H1 (cell line): ENCODE measurements at regions of chr2 and their contacts with region 1.

Region 1: DNA sequence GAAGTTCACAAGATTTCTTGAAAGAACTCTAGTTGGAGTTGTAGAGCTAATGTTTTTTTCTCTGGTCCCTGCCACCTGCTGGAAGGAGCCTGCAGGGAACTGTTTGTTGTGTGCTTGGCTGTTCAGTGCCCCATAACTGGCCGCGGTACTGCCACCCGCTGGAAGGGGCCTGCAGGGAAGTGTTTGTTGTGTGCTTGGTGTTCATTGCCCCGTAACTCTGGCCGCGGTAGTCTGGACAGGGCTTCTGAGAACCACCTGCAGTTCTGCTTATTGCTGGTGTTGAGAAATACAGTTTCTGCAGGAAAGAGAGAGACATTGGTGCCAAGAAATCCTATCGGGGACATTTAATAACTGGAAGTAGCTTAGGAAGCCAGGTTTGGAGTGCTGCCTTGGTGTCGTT is 58.1 kb downstream of the AGAP1 start:
- DNase-seq: peak in 1 of 2 experiments; percentile 38
- H3K4me3 ChIP-seq: no peak overlapping the region
- H3K27ac ChIP-seq: no peak overlapping the region
- H3K4me1 ChIP-seq: peaks cover 0 to 14% (median 4%) of the 10 kb centered on the region in 4 experiments; a peak in 3 of 7 replicates
- H3K27me3 ChIP-seq: no peaks in the 10 kb centered on the region
- CTCF ChIP-seq: peak; percentile 72 to 95 (median 73)
- EP300 ChIP-seq: no peak
- POLR2A ChIP-seq: no peak
- RAD21 ChIP-seq: peak; percentile 63 to 75

Region 2: GRCh38 chr2:235358981-235359471 is 192.9 kb before region 1 on chr2:
- CTCF ChIA-PET with region 1: no interaction called
- POLR2A ChIA-PET with region 1: no interaction called
- DNase-seq: no peak
- H3K4me3 ChIP-seq: no peak overlapping the region
- H3K27ac ChIP-seq: no peak overlapping the region
- H3K4me1 ChIP-seq: no peaks in the 10 kb centered on the region
- H3K27me3 ChIP-seq: no peaks in the 10 kb centered on the region
- CTCF ChIP-seq: no peak
- EP300 ChIP-seq: no peak
- POLR2A ChIP-seq: no peak
- RAD21 ChIP-seq: no peak

Region 3: GRCh38 chr2:235495373-235496238 is 56.4 kb before region 1 on chr2:
- CTCF ChIA-PET with region 1: interaction called, 25 read pairs
- POLR2A ChIA-PET with region 1: no interaction called
- DNase-seq: no peak
- H3K4me3 ChIP-seq: peak overlapping the region; percentile 52 to 78 (median 67)
- H3K27ac ChIP-seq: no peak overlapping the region
- H3K4me1 ChIP-seq: peaks cover 9 to 38% (median 19%) of the 10 kb centered on the region in 4 experiments
- H3K27me3 ChIP-seq: peaks cover 0 to 11% (median 7%) of the 10 kb centered on the region in 4 experiments; a peak in 5 of 7 replicates
- CTCF ChIP-seq: no peak
- EP300 ChIP-seq: no peak
- POLR2A ChIP-seq: no peak
- RAD21 ChIP-seq: no peak

Region 4: DNA sequence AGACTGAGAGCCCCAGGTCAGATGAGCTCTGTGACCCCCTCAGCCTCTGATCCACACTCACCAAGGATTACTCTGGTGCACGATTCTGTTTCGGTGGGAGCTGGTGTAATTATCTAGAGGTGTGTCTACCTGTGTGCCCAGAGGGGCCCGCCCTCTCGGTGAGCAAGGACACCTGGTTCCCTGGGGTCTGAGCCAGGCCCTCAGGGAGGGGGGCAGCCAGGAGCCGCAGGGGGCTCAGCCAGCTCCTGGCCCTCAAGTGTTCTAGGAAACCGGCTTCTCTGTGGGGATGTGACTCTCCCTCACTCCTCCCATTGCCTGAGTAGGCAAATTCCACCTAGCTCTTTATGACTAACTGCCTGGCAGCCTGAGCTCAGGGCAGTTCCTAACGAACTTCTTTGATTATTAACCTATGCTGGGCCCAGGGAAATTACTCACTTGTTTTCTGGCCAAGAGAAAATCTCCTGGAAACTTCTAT is 40.7 kb before region 1 on chr2:
- CTCF ChIA-PET with region 1: interaction called, 24 read pairs
- POLR2A ChIA-PET with region 1: interaction called, 5 read pairs
- DNase-seq: no peak
- H3K4me3 ChIP-seq: no peak overlapping the region
- H3K27ac ChIP-seq: no peak overlapping the region
- H3K4me1 ChIP-seq: peaks cover 0 to 8% (median 3%) of the 10 kb centered on the region in 4 experiments; a peak in 3 of 7 replicates
- H3K27me3 ChIP-seq: no peaks in the 10 kb centered on the region; a peak in 1 of 7 replicates
- CTCF ChIP-seq: no peak
- EP300 ChIP-seq: no peak
- POLR2A ChIP-seq: no peak
- RAD21 ChIP-seq: no peak

Region 5: DNA sequence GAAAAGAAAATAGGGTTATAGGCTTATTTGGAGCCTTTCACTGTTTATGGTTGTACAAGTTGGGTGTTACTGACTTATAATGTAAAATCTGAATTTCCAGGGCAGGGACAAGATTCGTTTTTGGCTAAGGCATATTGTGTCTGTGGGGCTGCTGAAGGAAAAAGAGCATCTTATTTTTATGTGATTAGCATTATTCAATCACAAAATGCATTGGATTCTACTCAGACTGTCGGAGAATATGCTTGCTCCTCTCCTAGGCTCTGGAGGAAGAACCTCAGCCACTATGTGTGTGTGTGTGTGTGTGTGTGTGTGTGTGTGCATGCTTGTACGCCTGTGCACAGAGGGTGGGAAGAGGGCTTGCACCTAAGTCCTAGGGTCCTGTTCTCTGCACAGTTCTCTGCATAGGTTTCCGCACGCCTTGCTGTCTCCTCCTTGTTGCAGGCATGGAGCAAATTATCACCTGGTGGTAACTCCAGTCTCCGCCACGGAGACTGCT is 13.8 kb before region 1 on chr2:
- CTCF ChIA-PET with region 1: interaction called, 11 read pairs
- POLR2A ChIA-PET with region 1: interaction called, 3 read pairs
- DNase-seq: no peak
- H3K4me3 ChIP-seq: no peak overlapping the region
- H3K27ac ChIP-seq: no peak overlapping the region
- H3K4me1 ChIP-seq: peaks cover 2 to 13% (median 7%) of the 10 kb centered on the region in 4 experiments
- H3K27me3 ChIP-seq: no peaks in the 10 kb centered on the region
- CTCF ChIP-seq: no peak
- EP300 ChIP-seq: no peak
- POLR2A ChIP-seq: no peak
- RAD21 ChIP-seq: no peak

Region 6: GRCh38 chr2:235563051-235563910 is 11.3 kb after region 1 on chr2:
- CTCF ChIA-PET with region 1: interaction called, 28 read pairs
- POLR2A ChIA-PET with region 1: no interaction called
- DNase-seq: no peak
- H3K4me3 ChIP-seq: no peak overlapping the region
- H3K27ac ChIP-seq: 0 out of 2 replicates have a peak overlapping the region, but pooled peaks have one; percentile 36
- H3K4me1 ChIP-seq: peaks cover 0 to 7% (median under 1%) of the 10 kb centered on the region in 4 experiments; a peak in 4 of 7 replicates
- H3K27me3 ChIP-seq: no peaks in the 10 kb centered on the region
- CTCF ChIP-seq: no peak
- EP300 ChIP-seq: no peak
- POLR2A ChIP-seq: no peak
- RAD21 ChIP-seq: no peak